ENCODE measurements at regions of chr12 and their contacts with region 1.

Region 1: DNA sequence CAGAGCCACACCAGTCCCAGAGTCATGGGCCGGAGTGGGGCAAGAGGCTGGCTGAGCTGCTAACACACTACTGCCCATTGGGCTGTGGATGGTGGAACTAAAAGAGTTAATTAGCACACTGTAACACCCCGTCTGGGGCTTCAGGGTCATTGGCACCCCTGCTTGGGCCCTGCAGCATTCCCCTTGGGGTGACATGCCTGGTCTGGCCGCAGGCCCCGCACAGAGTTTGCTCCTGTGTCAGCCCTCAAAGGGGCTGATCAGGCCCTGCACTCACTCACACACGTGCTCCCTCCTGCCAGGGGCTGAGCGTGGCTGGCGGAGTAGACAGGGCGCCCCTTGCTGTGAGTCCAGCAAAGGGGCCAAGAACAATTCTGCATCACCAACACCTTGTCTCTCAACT is 1499.6 kb upstream of the TMEM132C start:
- DNase-seq: no peak
- ATAC-seq: no peak
- H3K4me3 ChIP-seq: no peak overlapping the region
- H3K4me3 Mint-ChIP-seq: no peak overlapping the region
- H3K27ac ChIP-seq: no peak overlapping the region
- H3K27ac Mint-ChIP-seq: no peak overlapping the region
- H3K4me1 ChIP-seq: no peaks in the 10 kb centered on the region
- H3K4me1 Mint-ChIP-seq: peaks cover 6% of the 10 kb centered on the region
- H3K27me3 ChIP-seq: no peaks in the 10 kb centered on the region
- H3K27me3 Mint-ChIP-seq: no peaks in the 10 kb centered on the region
- CTCF ChIP-seq: no peak

Region 2: DNA sequence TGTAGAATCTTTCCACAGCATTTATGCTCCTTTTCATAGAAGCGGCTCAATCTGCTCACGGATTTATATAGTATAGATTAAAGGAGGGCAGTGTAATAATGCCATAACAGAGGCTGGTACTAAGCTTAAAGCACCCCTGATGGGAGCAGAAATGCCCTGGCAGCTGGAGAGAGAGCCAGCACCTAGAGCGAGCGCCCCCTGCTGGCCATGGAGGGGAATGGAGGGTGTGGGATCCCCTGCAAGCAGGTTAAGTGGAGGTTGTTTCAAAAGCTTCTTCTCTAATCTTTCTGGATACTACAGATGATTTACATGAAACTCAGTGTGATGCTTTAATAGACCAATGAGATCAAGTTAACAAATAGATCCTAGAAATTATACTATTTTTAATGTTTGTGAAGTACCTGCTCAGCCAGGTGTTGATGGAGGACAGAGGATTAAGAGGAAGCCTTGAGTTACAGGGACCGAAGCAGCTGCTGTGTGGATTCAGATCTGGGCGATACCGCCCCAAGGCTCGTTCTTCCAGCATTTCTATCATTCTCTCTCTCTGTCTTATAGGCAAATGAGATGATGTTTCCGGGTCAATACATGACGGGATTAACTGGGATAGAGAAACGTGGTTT is 19.7 kb before region 1 on chr12:
- CTCF ChIA-PET with region 1: interaction called, 11 read pairs
- POLR2A ChIA-PET with region 1: no interaction called
- intact Hi-C with region 1: no loop called
- DNase-seq: peak; percentile 32
- ATAC-seq: no peak
- H3K4me3 ChIP-seq: no peak overlapping the region
- H3K4me3 Mint-ChIP-seq: no peak overlapping the region
- H3K27ac ChIP-seq: no peak overlapping the region
- H3K27ac Mint-ChIP-seq: no peak overlapping the region
- H3K4me1 ChIP-seq: no peaks in the 10 kb centered on the region
- H3K4me1 Mint-ChIP-seq: no peaks in the 10 kb centered on the region
- H3K27me3 ChIP-seq: no peaks in the 10 kb centered on the region
- H3K27me3 Mint-ChIP-seq: no peaks in the 10 kb centered on the region
- CTCF ChIP-seq: peak; percentile 90

Measured in B cell (primary cell).